ENCODE measurements at regions of chr6 and their contacts with region 1.

Region 1: GRCh38 chr6:109491207-109491938 is 8.4 kb upstream of the ZBTB24 start:
- DNase-seq: peak; percentile 56
- H3K4me3 Mint-ChIP-seq: peak overlapping the region; percentile 41
- H3K27ac Mint-ChIP-seq: peak overlapping the region; percentile 92
- H3K4me1 Mint-ChIP-seq: peaks cover 35% of the 10 kb centered on the region
- H3K27me3 Mint-ChIP-seq: peaks cover 5% of the 10 kb centered on the region

Region 2: GRCh38 chr6:109515781-109516409 is 24.5 kb after region 1 on chr6:
- CTCF ChIA-PET with region 1: interaction called, 5 read pairs
- POLR2A ChIA-PET with region 1: interaction called, 12 read pairs
- DNase-seq: no peak
- H3K4me3 Mint-ChIP-seq: peak overlapping the region; percentile 59
- H3K27ac Mint-ChIP-seq: peak overlapping the region; percentile 33
- H3K4me1 Mint-ChIP-seq: peaks cover 35% of the 10 kb centered on the region
- H3K27me3 Mint-ChIP-seq: no peaks in the 10 kb centered on the region